Aorta (tissue), 5 donors: ENCODE measurements at regions of chr2 and their contacts with region 1.

Region 1: GRCh38 chr2:223725494-223725893 is 111.9 kb downstream of the AP1S3 start:
- DNase-seq: peak; percentile 91 to 95
- ATAC-seq: peak; percentile 89
- H3K4me3 ChIP-seq: no peak overlapping the region
- H3K27ac ChIP-seq: peak overlapping the region; percentile 57 to 67
- H3K4me1 ChIP-seq: peaks cover 0 to 2% of the 10 kb centered on the region in 2 donors
- H3K27me3 ChIP-seq: no peaks in the 10 kb centered on the region

Region 2: GRCh38 chr2:223692191-223692947 is 33.1 kb before region 1 on chr2:
- intact Hi-C with region 1: no loop called
- DNase-seq: no peak
- ATAC-seq: no peak
- H3K4me3 ChIP-seq: no peak overlapping the region
- H3K27ac ChIP-seq: no peak overlapping the region
- H3K4me1 ChIP-seq: no peaks in the 10 kb centered on the region
- H3K27me3 ChIP-seq: no peaks in the 10 kb centered on the region

Region 3: GRCh38 chr2:223760838-223761502 is 35.5 kb after region 1 on chr2:
- intact Hi-C with region 1: loop called in 1 of 2 experiments (anchors 1 kb)
- DNase-seq: peak in 1 of 2 donors; percentile 68
- ATAC-seq: peak; percentile 74
- H3K4me3 ChIP-seq: no peak overlapping the region
- H3K27ac ChIP-seq: no peak overlapping the region
- H3K4me1 ChIP-seq: no peaks in the 10 kb centered on the region
- H3K27me3 ChIP-seq: no peaks in the 10 kb centered on the region

Region 4: DNA sequence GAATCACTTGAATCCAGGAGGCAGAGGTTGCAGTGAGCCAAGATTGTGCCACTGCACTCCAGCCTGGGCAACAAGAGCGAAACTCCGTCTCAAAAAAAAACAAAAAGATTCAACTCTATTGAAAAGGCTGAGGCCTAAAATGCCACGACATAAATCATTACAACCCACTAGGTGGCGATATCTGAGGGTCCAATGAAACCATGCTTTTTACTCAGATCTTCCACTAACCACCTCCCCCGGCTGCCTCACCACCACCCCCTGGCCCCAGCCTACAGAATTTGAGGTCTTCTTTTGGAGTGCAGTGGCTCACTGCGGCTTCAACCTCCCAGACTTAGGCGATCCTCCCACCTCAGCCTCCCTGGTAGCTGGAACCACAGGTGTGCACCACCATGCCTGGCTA is 54.4 kb after region 1 on chr2:
- intact Hi-C with region 1: no loop called
- DNase-seq: no peak
- ATAC-seq: no peak
- H3K4me3 ChIP-seq: no peak overlapping the region
- H3K27ac ChIP-seq: no peak overlapping the region
- H3K4me1 ChIP-seq: no peaks in the 10 kb centered on the region
- H3K27me3 ChIP-seq: no peaks in the 10 kb centered on the region

Region 5: GRCh38 chr2:223959688-223960087 is 234.2 kb after region 1 on chr2:
- intact Hi-C with region 1: no loop called
- DNase-seq: peak in 1 of 2 donors; percentile 56
- ATAC-seq: no peak
- H3K4me3 ChIP-seq: no peak overlapping the region
- H3K27ac ChIP-seq: no peak overlapping the region
- H3K4me1 ChIP-seq: peaks cover 2 to 12% of the 10 kb centered on the region in 2 donors
- H3K27me3 ChIP-seq: no peaks in the 10 kb centered on the region